Gastrocnemius medialis (tissue), 4 donors: ENCODE measurements at regions of chr7 and their contacts with region 1.

Region 1: GRCh38 chr7:70392256-70392876 is 739.6 kb upstream of the GALNT17 start:
- DNase-seq: no peak
- ATAC-seq: peak in 1 of 2 donors; percentile 66
- H3K4me3 ChIP-seq: no peak overlapping the region
- H3K27ac ChIP-seq: no peak overlapping the region
- H3K4me1 ChIP-seq: no peaks in the 10 kb centered on the region
- H3K27me3 ChIP-seq: no peaks in the 10 kb centered on the region
- CTCF ChIP-seq: no peak
- POLR2A ChIP-seq: no peak

Region 2: DNA sequence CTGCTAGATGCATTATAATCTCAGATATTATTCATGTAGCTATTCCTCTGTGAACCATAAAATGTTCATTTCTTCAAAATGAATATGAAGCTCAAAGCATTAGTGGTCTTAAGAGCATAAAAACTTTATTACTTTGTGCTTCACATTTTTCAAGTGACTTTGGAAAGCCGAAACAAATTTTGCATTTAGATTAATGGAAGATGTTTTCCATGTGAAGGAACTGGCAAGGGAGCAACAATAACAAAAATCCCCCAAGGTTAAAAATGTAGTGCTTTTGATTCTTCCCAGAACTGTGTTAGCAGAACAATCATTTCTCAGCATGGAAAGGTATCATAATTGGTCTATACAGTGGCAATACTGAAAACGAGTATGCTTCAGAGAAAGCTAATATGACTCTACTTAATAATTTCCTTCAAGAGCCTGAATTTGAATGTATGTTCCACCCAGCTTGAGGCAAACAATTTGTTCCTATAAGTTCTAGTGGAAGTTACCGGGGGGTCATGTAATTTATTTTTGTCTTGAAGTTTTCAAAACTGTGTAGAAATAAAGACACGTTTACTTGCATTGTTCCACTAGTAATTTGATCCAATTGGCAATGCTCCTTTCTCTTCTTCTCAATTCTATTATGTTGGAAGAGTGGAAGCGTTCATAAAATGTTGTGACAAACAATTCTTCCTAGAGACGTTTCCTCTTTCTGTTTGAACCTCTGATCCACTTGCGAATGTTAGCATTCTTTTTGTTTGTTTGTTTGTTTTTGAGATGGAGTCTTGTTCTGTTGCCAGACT is 128.7 kb before region 1 on chr7:
- in situ Hi-C with region 1: no loop called
- intact Hi-C with region 1: loop called (anchors 5 kb)
- DNase-seq: no peak
- ATAC-seq: no peak
- H3K4me3 ChIP-seq: no peak overlapping the region
- H3K27ac ChIP-seq: no peak overlapping the region
- H3K4me1 ChIP-seq: no peaks in the 10 kb centered on the region
- H3K27me3 ChIP-seq: no peaks in the 10 kb centered on the region
- CTCF ChIP-seq: no peak
- POLR2A ChIP-seq: no peak